AG04450 (cell line): ENCODE measurements at regions of chr6 and their contacts with region 1.

Region 1: GRCh38 chr6:116531675-116532570 is 13.6 kb downstream of the TRAPPC3L start:
- DNase-seq: peak; percentile 52
- H3K4me3 ChIP-seq: no peak overlapping the region
- H3K27ac ChIP-seq: no peak overlapping the region
- H3K27me3 ChIP-seq: no peaks in the 10 kb centered on the region
- CTCF ChIP-seq: peak; percentile 82

Region 2: DNA sequence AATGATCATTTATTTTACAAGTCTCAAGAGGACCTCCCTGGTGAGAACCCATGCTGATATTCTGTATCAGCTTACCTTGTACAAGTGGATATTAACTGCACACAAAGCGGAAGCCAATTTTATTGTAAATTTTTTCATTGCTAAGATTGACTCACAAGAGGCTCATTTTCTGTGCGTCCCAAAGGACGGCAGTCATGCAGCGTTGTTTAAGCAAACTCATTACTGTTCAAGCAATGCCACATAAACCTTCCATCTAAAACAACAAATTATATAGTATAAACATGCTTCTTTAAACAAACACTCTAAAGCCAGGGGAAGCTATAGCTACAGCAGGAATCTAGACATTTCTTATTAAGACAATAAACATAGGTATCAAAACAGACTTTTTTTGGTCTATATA is 1046.5 kb before region 1 on chr6:
- CTCF ChIA-PET with region 1: no interaction called
- POLR2A ChIA-PET with region 1: no interaction called
- DNase-seq: no peak
- H3K4me3 ChIP-seq: no peak overlapping the region
- H3K27ac ChIP-seq: no peak overlapping the region
- H3K27me3 ChIP-seq: no peaks in the 10 kb centered on the region
- CTCF ChIP-seq: no peak

Region 3: GRCh38 chr6:116244284-116244683 is 287.6 kb before region 1 on chr6:
- CTCF ChIA-PET with region 1: no interaction called
- POLR2A ChIA-PET with region 1: no interaction called
- DNase-seq: no peak
- H3K4me3 ChIP-seq: no peak overlapping the region
- H3K27ac ChIP-seq: no peak overlapping the region
- H3K27me3 ChIP-seq: no peaks in the 10 kb centered on the region
- CTCF ChIP-seq: no peak

Region 4: GRCh38 chr6:116279260-116280063 is 252.5 kb before region 1 on chr6 and contains the start of gene TSPYL1:
- CTCF ChIA-PET with region 1: interaction called, 19 read pairs
- POLR2A ChIA-PET with region 1: no interaction called
- DNase-seq: peak; percentile 92
- H3K4me3 ChIP-seq: peak within 1 kb of the TSS; percentile 88
- H3K27ac ChIP-seq: peak within 1 kb of the TSS; percentile 97
- H3K27me3 ChIP-seq: no peaks in the 10 kb centered on the region
- CTCF ChIP-seq: 0 out of 2 replicates have a peak, but pooled peaks have one; percentile 6
- polyA plus RNA-seq, gene TSPYL1: 65.9 and 71.9 TPM in 2 replicates

Region 5: DNA sequence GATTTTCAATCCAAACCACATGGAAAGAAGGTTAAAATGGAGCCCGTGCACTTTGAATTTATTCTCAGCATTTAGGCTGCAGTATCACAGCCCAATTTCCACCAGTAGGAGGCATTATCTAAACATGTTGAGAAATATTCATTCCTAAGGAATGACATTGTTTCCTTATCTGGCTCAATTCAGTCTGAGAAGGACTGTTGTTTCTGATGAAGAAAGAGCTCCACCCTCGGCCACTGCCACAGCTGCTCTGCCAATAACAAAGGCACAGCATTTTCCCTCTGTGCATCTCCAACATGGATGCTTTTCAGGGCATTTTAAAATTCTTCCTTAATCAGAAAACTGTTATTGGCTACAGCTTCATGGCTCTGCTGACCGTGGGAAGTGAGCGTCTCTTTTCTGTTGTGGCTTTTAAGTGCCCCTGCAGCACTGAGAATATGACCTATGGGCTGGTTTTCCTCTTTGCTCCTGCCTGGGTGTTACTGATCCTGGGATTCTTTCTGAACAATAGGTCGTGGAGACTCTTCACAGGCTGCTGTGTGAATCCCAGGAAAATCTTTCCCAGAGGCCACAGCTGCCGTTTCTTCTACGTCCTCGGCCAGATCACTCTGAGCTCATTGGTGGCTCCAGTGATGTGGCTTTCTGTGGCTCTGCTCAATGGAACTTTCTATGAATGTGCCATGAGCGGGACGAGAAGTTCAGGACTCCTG is 20.4 kb before region 1 on chr6 and contains the start of gene CALHM5:
- CTCF ChIA-PET with region 1: interaction called, 75 read pairs
- POLR2A ChIA-PET with region 1: interaction called, 4 read pairs
- DNase-seq: peak; percentile 78
- H3K4me3 ChIP-seq: peak within 1 kb of the TSS; percentile 66
- H3K27ac ChIP-seq: peak within 1 kb of the TSS; percentile 94
- H3K27me3 ChIP-seq: no peaks in the 10 kb centered on the region
- CTCF ChIP-seq: peak; percentile 83
- polyA plus RNA-seq, gene CALHM5: 6.8 and 7.7 TPM in 2 replicates

Region 6: DNA sequence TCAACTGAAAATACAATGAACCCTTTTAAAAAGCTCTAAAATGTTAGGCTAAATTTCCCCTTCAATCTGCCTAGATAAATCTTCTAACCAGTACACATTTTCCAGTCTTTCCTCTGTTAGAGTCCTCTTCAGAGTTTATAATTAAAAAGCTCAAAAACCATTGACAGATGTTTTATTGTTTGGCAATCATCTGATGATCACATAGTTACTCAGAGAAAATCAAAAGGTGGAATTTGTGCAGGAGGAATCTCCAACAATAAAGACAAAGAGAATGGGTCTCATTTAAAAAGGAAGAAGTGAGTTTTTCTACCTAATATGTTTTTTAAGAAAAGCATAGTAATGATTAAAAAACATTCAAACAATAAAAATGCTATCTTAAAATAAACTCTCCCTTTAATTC is 10.5 kb after region 1 on chr6:
- CTCF ChIA-PET with region 1: interaction called, 16 read pairs
- POLR2A ChIA-PET with region 1: no interaction called
- DNase-seq: no peak
- H3K4me3 ChIP-seq: no peak overlapping the region
- H3K27ac ChIP-seq: no peak overlapping the region
- H3K27me3 ChIP-seq: no peaks in the 10 kb centered on the region
- CTCF ChIP-seq: no peak

Region 7: GRCh38 chr6:116556065-116556464 is 24.1 kb after region 1 on chr6:
- CTCF ChIA-PET with region 1: interaction called, 83 read pairs
- POLR2A ChIA-PET with region 1: no interaction called
- DNase-seq: no peak
- H3K4me3 ChIP-seq: no peak overlapping the region
- H3K27ac ChIP-seq: peak overlapping the region; percentile 49
- H3K27me3 ChIP-seq: no peaks in the 10 kb centered on the region
- CTCF ChIP-seq: no peak

Region 8: GRCh38 chr6:116561377-116562018 is 29.6 kb after region 1 on chr6:
- CTCF ChIA-PET with region 1: interaction called, 83 read pairs
- POLR2A ChIA-PET with region 1: no interaction called
- DNase-seq: peak; percentile 51
- H3K4me3 ChIP-seq: no peak overlapping the region
- H3K27ac ChIP-seq: no peak overlapping the region
- H3K27me3 ChIP-seq: no peaks in the 10 kb centered on the region
- CTCF ChIP-seq: peak; percentile 91